Common myeloid progenitor, CD34-positive (primary cell): ENCODE measurements at regions of chr13 and their contacts with region 1.

Region 1: GRCh38 chr13:108508263-108508662 is 121.1 kb upstream of the MYO16 start:
- DNase-seq: peak; percentile 44 to 65 (median 60)
- H3K4me3 ChIP-seq: no peak overlapping the region
- H3K27ac ChIP-seq: no peak overlapping the region
- H3K4me1 ChIP-seq: no peaks in the 10 kb centered on the region
- H3K27me3 ChIP-seq: no peaks in the 10 kb centered on the region

Region 2: DNA sequence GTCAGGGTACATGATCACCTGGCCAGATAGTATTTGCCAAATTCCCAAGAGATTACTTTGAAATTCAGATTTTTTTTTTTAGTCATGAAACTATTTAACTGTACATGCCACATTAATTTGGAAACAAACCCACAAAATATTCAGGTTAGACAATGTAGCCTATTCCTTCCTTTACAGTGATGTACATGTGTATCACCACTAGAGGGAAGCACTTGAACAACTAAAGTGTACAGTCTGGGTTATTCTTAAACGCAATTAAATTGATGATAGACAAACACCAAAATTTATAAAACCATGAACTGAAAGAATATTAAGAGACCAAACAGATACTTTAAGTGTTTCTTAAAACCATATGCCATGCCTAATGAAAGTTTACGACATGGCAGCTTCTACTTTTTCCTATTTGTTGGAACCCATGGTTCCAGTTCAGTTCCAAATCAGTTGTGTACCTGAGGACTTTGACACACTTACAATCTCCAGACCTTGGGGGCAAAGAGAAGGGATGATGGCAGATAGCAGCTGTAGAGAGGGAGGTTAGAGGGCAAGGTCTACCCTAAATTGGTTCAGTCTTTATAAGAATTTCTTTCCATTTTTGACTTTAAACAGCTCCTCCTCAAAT is 185.9 kb before region 1 on chr13:
- CTCF ChIA-PET with region 1: interaction called, 32 read pairs
- POLR2A ChIA-PET with region 1: no interaction called
- DNase-seq: peak; percentile 43 to 79 (median 78)
- H3K4me3 ChIP-seq: no peak overlapping the region
- H3K27ac ChIP-seq: no peak overlapping the region
- H3K4me1 ChIP-seq: peaks cover 6 to 10% (median 10%) of the 10 kb centered on the region in 4 experiments
- H3K27me3 ChIP-seq: no peaks in the 10 kb centered on the region

Region 3: DNA sequence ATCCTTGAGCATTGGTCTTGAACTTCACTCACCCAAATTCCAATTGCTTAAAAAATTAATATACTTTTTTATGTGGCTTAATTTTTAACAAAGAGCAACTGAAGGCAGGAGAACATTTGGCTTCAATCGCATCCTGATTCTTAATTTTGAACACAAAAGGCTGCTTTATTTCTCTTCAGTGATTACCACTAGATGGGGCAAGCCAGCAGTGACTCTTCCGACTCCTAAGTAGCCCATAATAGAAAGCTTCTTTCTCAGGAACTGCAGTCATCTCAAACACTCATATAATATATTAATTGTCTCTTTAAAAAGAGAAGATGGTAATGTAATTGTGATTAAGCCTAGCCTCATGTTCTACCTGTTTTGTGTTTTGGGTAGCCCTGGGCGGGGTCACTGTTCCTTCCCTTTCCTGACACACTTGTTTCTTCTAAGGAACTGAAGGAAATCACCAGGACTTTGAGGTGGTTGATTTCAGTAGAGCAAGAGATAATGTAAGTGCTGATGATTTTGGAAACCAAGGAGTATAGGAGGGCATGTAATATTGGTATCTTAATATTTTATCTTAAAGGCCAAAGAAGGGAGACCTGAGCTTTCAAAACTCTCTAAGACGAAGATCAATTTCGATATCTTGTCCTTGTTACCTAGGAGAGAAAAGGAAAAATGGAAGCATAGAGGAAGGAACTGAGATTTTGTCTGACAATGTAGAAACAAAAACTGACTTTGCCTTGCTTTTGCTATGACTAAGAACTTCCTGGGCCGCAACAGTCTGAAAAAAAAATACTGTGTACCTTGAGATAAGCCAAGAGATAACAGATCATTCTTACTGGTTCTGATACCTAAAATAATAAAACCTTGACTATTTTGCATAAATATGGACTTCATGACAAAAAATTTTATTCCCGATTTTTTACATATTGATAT is 165.6 kb before region 1 on chr13:
- CTCF ChIA-PET with region 1: interaction called, 11 read pairs
- POLR2A ChIA-PET with region 1: no interaction called
- DNase-seq: peak; percentile 36 to 68 (median 66)
- H3K4me3 ChIP-seq: peak overlapping the region in 1 of 7 experiments; percentile 46
- H3K27ac ChIP-seq: no peak overlapping the region
- H3K4me1 ChIP-seq: peaks cover 0 to 9% (median 0%) of the 10 kb centered on the region in 4 experiments
- H3K27me3 ChIP-seq: no peaks in the 10 kb centered on the region

Region 4: DNA sequence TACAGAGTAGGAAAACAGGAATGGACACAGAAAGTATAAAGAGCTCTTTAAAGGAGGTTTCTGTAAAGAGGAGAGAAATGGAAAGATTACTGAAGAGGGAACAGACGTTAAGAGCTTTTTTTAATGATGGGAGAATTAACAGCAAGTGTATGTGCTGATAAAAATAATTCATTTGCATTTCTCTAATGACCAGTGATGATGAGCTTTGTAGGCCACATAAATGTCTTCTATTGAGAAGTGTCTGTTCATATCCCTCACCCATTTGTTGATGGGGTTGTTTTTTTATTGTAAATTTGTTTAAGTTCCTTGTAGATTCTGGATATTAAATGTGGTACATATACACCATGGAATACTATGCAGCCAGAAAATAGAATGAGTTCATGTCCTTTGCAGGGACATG is 161.1 kb after region 1 on chr13:
- CTCF ChIA-PET with region 1: no interaction called
- POLR2A ChIA-PET with region 1: no interaction called
- DNase-seq: peak in 2 of 3 donors; percentile 2 to 60
- H3K4me3 ChIP-seq: no peak overlapping the region
- H3K27ac ChIP-seq: no peak overlapping the region
- H3K4me1 ChIP-seq: no peaks in the 10 kb centered on the region
- H3K27me3 ChIP-seq: no peaks in the 10 kb centered on the region